ENCODE measurements at regions of chr3 and their contacts with region 1.

Region 1: GRCh38 chr3:36957862-36958686 is 13.2 kb upstream of the TRANK1 start:
- DNase-seq: no peak
- H3K4me3 ChIP-seq: peak overlapping the region; percentile 4; the same call in 1 of the 2 replicates
- H3K4me3 Mint-ChIP-seq: peak overlapping the region; percentile 70
- H3K27ac Mint-ChIP-seq: peak overlapping the region; percentile 91
- H3K4me1 ChIP-seq: peaks cover 25% of the 10 kb centered on the region
- H3K4me1 Mint-ChIP-seq: peaks cover 26% of the 10 kb centered on the region
- H3K27me3 ChIP-seq: no peaks in the 10 kb centered on the region
- H3K27me3 Mint-ChIP-seq: no peaks in the 10 kb centered on the region
- CTCF ChIP-seq: no peak

Region 2: GRCh38 chr3:36792342-36792741 is 165.7 kb before region 1 on chr3:
- CTCF ChIA-PET with region 1: interaction called, 9 read pairs
- POLR2A ChIA-PET with region 1: no interaction called
- intact Hi-C with region 1: loop called (anchors 1 kb)
- DNase-seq: peak in 1 of 2 experiments; percentile 60
- H3K4me3 ChIP-seq: no peak overlapping the region
- H3K4me3 Mint-ChIP-seq: no peak overlapping the region
- H3K27ac Mint-ChIP-seq: no peak overlapping the region
- H3K4me1 ChIP-seq: no peaks in the 10 kb centered on the region
- H3K4me1 Mint-ChIP-seq: no peaks in the 10 kb centered on the region
- H3K27me3 ChIP-seq: no peaks in the 10 kb centered on the region
- H3K27me3 Mint-ChIP-seq: peaks cover 23% of the 10 kb centered on the region
- CTCF ChIP-seq: peak; percentile 60 to 73

Region 3: DNA sequence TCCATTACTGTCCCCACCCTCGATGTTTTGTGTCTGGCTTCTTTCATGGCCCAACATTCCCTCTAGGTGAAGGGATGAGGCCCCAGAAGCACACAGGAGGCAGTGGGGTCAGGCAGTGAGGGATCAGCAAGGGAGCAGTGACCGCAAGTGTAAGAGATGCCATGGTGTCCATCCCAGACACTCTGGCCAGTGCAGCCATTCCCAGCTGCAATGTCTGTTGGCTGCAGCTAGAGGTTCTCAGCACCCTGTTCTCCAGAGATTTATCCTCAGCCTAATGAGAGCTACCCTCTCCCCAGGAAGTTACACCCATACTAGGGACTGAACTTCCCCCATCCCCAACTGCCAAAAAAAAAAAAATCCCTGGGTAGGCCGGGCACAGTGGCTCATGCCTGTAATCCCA is 53.4 kb before region 1 on chr3:
- CTCF ChIA-PET with region 1: interaction called, 75 read pairs
- POLR2A ChIA-PET with region 1: interaction called, 5 read pairs
- intact Hi-C with region 1: loop called (anchors 1 kb)
- DNase-seq: peak in 1 of 2 experiments; percentile 44
- H3K4me3 ChIP-seq: no peak overlapping the region
- H3K4me3 Mint-ChIP-seq: no peak overlapping the region
- H3K27ac Mint-ChIP-seq: no peak overlapping the region
- H3K4me1 ChIP-seq: 0 out of 2 replicates have a peak, but pooled peaks cover 8% of the 10 kb centered on the region
- H3K4me1 Mint-ChIP-seq: peaks cover 22% of the 10 kb centered on the region
- H3K27me3 ChIP-seq: no peaks in the 10 kb centered on the region
- H3K27me3 Mint-ChIP-seq: no peaks in the 10 kb centered on the region
- CTCF ChIP-seq: peak in 1 of 2 experiments; percentile 67

Region 4: DNA sequence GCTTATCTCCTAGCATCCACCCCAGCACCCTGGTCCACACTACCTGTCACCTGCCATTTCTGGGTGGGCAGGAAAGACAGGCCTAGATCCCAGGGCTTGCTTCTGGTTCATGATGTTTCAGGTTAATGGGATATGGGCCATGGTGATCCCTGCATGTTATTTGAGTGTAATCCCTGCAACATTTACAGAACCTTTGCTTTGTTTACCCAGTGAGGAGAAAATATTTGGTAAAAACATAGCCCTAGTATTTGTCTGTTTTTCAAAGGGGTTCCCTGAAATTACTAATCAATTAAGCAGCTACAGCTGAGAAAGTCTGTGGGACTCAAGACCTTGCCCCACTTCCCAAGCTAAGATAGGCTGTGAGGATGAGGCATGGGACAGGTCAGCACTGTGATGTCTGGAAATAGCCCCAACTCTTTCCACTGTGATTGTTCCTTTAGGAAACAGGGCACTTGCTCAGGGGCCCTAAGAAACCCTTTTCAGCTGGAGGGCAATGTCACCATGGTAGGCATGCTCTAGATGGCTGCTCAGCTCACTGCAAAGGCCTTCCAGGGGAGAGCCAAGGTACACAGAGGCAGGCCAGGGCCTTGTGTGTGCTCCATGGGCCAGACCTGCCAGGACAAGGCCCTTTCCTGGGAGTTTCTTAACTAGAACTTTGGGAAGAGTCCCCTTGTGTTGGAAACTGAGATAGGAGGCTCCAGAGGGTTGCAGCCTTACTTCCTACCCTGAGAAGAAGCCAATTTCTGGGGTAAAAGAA is 24.4 kb before region 1 on chr3:
- CTCF ChIA-PET with region 1: no interaction called
- POLR2A ChIA-PET with region 1: no interaction called
- intact Hi-C with region 1: loop called (anchors 2 kb)
- DNase-seq: no peak
- H3K4me3 ChIP-seq: no peak overlapping the region
- H3K4me3 Mint-ChIP-seq: no peak overlapping the region
- H3K27ac Mint-ChIP-seq: peak overlapping the region; percentile 75
- H3K4me1 ChIP-seq: peaks cover 19% of the 10 kb centered on the region
- H3K4me1 Mint-ChIP-seq: peaks cover 23% of the 10 kb centered on the region
- H3K27me3 ChIP-seq: no peaks in the 10 kb centered on the region
- H3K27me3 Mint-ChIP-seq: no peaks in the 10 kb centered on the region
- CTCF ChIP-seq: no peak

Region 5: DNA sequence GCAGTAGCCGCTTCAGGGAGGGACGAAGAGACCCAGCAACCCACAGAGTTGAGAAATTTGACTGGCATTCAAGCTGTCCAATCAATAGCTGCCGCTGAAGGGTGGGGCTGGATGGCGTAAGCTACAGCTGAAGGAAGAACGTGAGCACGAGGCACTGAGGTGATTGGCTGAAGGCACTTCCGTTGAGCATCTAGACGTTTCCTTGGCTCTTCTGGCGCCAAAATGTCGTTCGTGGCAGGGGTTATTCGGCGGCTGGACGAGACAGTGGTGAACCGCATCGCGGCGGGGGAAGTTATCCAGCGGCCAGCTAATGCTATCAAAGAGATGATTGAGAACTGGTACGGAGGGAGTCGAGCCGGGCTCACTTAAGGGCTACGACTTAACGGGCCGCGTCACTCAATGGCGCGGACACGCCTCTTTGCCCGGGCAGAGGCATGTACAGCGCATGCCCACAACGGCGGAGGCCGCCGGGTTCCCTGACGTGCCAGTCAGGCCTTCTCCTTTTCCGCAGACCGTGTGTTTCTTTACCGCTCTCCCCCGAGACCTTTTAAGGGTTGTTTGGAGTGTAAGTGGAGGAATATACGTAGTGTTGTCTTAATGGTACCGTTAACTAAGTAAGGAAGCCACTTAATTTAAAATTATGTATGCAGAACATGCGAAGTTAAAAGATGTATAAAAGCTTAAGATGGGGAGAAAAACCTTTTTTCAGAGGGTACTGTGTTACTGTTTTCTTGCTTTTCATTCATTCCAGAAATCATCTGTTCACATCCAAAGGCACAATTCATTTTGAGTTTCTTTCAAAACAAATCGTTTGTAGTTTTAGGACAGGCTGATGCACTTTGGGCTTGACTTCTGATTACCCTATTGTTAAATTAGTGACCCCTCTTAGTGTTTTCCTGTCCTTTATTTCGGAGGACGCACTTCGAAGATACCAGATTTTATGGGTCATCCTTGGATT is 35.5 kb after region 1 on chr3 and contains the start of gene MLH1:
- CTCF ChIA-PET with region 1: interaction called, 22 read pairs
- POLR2A ChIA-PET with region 1: interaction called, 20 read pairs
- intact Hi-C with region 1: no loop called
- DNase-seq: peak; percentile 99 to 100
- H3K4me3 ChIP-seq: peak within 1 kb of the TSS; percentile 81
- H3K4me3 Mint-ChIP-seq: no peak within 1 kb of the TSS
- H3K27ac Mint-ChIP-seq: no peak within 1 kb of the TSS
- H3K4me1 ChIP-seq: no peaks in the 10 kb centered on the region
- H3K4me1 Mint-ChIP-seq: no peaks in the 10 kb centered on the region
- H3K27me3 ChIP-seq: no peaks in the 10 kb centered on the region
- H3K27me3 Mint-ChIP-seq: no peaks in the 10 kb centered on the region
- CTCF ChIP-seq: no peak
- total RNA-seq, gene MLH1: 49.6 and 51.0 TPM in 2 replicates

Measured in Caco-2 (cell line).